ENCODE measurements at regions of chr5 and their contacts with region 1.

Region 1: DNA sequence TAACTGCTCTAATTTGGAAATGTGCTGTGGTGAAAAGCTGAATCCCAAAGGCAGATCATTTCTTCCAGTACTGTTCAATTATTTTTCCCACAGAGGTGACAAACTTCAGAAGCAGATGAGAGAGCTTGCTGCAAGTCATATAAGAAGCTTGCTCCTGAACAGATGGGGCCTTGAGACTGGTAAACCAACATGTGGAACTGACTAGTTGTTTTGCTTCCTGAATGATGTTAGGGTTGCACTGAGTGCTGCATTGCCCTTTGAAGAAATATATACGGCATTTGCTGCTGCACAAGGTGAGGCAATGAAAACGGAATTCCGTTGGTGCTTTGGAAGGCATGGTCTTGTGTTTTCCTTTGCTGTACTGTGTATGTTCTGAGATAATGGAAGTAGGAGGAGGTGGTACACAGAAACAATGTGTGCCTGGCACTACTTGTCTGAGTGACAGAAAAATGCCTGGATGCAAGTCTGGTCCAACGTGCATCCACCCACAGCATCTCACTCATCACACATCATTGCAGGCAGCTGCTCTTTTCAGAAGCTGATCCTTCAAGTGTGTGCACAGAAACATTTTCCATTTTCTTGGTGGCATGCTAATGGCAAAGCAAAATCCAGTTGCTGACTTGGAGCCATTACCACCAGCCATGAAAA is 76.9 kb downstream of the ANKH start:
- DNase-seq: no peak
- ATAC-seq: no peak
- H3K4me3 ChIP-seq: no peak overlapping the region
- H3K27ac ChIP-seq: no peak overlapping the region
- H3K4me1 ChIP-seq: no peaks in the 10 kb centered on the region
- H3K27me3 ChIP-seq: no peaks in the 10 kb centered on the region
- CTCF ChIP-seq: no peak
- POLR2A ChIP-seq: no peak

Region 2: GRCh38 chr5:14545308-14545707 is 249.4 kb before region 1 on chr5:
- in situ Hi-C with region 1: no loop called
- intact Hi-C with region 1: no loop called
- DNase-seq: peak in 1 of 2 donors; percentile 17
- ATAC-seq: no peak
- H3K4me3 ChIP-seq: no peak overlapping the region
- H3K27ac ChIP-seq: no peak overlapping the region
- H3K4me1 ChIP-seq: no peaks in the 10 kb centered on the region
- H3K27me3 ChIP-seq: no peaks in the 10 kb centered on the region
- CTCF ChIP-seq: no peak
- POLR2A ChIP-seq: no peak

Region 3: GRCh38 chr5:14664302-14665100 is 130.2 kb before region 1 on chr5 and contains the start of gene OTULIN:
- in situ Hi-C with region 1: no loop called
- intact Hi-C with region 1: no loop called
- DNase-seq: peak; percentile 78 to 85
- ATAC-seq: peak; percentile 93 to 94
- H3K4me3 ChIP-seq: peak within 1 kb of the TSS; percentile 54 to 83 (median 70)
- H3K27ac ChIP-seq: peak within 1 kb of the TSS; percentile 81 to 90 (median 86)
- H3K4me1 ChIP-seq: peaks cover 26 to 31% of the 10 kb centered on the region in 2 donors
- H3K27me3 ChIP-seq: no peaks in the 10 kb centered on the region
- CTCF ChIP-seq: peak in 1 of 5 experiments; percentile 8
- POLR2A ChIP-seq: peak; percentile 92 to 95
- total RNA-seq, gene OTULIN: 15.1 to 28.3 (median 20.2) TPM

Region 4: DNA sequence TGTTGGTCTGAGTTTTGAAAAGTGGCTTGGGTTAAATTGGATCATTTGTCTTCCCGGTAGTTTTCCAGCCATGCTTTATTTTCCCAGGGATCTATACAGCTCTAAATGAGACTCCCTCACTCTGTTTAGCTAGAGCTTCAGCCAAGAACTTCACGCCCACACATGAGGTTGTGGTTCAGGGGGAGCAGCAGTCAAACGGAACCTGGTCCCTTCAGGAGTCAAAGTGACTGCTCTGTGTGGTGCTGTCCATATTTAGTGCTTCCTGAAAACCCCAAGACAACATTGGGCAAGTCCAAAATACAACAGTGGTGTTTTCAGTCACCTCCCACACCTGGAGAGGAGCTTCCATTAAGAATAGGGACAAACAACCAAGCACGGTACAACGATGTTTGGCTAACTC is 13.6 kb before region 1 on chr5:
- in situ Hi-C with region 1: no loop called
- intact Hi-C with region 1: loop called (anchors 1 kb)
- DNase-seq: no peak
- ATAC-seq: no peak
- H3K4me3 ChIP-seq: no peak overlapping the region
- H3K27ac ChIP-seq: peak overlapping the region in 3 of 4 donors; percentile 10 to 35 (median 28)
- H3K4me1 ChIP-seq: peaks cover 45 to 62% of the 10 kb centered on the region in 2 donors
- H3K27me3 ChIP-seq: no peaks in the 10 kb centered on the region
- CTCF ChIP-seq: no peak
- POLR2A ChIP-seq: no peak

Measured in gastrocnemius medialis (tissue), 4 donors.